CD14-positive monocyte (primary cell): ENCODE measurements at regions of chr12 and their contacts with region 1.

Region 1: DNA sequence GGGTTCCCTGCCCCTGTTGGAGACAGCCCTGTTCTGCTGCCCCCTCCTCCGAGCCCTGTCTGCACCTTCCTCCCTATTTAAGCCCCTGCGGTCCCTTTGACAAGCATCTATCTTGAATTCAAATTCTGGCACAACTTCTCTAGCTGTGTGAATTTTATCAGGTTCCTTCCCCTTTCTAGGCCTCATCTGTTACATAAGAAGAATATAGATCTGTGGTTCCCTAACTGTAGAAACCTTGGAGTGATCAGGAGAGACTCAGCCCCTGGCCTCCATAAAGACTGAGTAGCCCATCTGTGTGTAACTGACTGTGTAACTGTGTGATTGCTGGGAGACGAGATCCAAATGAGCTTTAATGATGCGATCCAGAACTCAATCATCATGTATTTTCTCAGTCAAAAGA is 13.0 kb upstream of the RACGAP1 start:
- DNase-seq: peak in 1 of 3 donors; percentile 23
- H3K4me3 ChIP-seq: no peak overlapping the region
- H3K4me3 Mint-ChIP-seq: no peak overlapping the region
- H3K27ac ChIP-seq: no peak overlapping the region
- H3K27ac Mint-ChIP-seq: peak overlapping the region in 2 of 7 donors; percentile 42 to 64
- H3K4me1 ChIP-seq: peaks cover 19 to 20% of the 10 kb centered on the region in 2 donors
- H3K4me1 Mint-ChIP-seq: peaks cover 30% of the 10 kb centered on the region
- H3K27me3 ChIP-seq: no peaks in the 10 kb centered on the region
- H3K27me3 Mint-ChIP-seq: peaks cover 5 to 20% (median 7%) of the 10 kb centered on the region in 3 donors
- CTCF ChIP-seq: no peak

Region 2: GRCh38 chr12:49049566-49050413 is 988.5 kb before region 1 on chr12:
- intact Hi-C with region 1: no loop called
- DNase-seq: no peak
- H3K4me3 ChIP-seq: no peak overlapping the region
- H3K4me3 Mint-ChIP-seq: no peak overlapping the region
- H3K27ac ChIP-seq: no peak overlapping the region
- H3K27ac Mint-ChIP-seq: peak overlapping the region in 4 of 7 donors; percentile 32 to 57 (median 41)
- H3K4me1 ChIP-seq: no peaks in the 10 kb centered on the region
- H3K4me1 Mint-ChIP-seq: peaks cover 2% of the 10 kb centered on the region
- H3K27me3 ChIP-seq: no peaks in the 10 kb centered on the region
- H3K27me3 Mint-ChIP-seq: peaks cover 0 to 3% (median 0%) of the 10 kb centered on the region in 3 donors
- CTCF ChIP-seq: no peak

Region 3: DNA sequence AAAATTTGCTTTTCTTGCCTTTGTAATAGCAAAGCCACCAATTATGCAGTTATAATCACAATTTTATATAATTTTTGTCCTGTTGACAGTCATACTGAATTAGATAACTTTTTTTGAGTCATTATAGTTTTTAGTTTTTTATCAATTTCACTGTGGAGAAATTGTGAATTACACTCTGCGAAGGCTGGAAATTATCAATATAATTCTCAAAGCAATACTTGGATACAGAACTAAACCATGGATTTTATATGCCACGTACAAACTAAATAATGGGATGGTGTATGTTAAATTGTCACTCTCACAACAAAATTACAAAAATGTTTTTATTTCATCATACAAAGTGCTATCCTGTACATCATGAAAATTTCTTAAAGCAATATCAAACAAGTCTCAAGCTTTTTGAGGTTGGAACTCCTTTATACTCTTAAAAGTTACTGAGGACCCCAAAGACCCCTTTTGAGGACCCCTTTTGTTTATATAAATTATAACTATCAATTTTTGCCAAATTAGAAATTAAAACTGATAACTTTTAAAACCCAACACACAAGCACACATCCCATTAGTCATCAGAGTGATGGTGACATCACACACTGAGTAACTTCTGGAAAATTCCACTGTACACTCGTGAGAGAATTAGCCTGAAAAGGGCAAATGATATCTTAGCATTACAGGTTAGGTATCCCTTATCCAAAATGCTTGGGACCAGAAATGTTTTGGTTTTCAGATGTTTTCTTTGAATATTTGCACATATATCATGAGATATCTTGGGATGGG is 107.6 kb before region 1 on chr12:
- intact Hi-C with region 1: no loop called
- DNase-seq: peak in 1 of 3 donors; percentile 76
- H3K4me3 ChIP-seq: no peak overlapping the region
- H3K4me3 Mint-ChIP-seq: no peak overlapping the region
- H3K27ac ChIP-seq: no peak overlapping the region
- H3K27ac Mint-ChIP-seq: no peak overlapping the region
- H3K4me1 ChIP-seq: no peaks in the 10 kb centered on the region
- H3K4me1 Mint-ChIP-seq: no peaks in the 10 kb centered on the region
- H3K27me3 ChIP-seq: peaks cover 0 to 8% of the 10 kb centered on the region in 2 donors
- H3K27me3 Mint-ChIP-seq: peaks cover 19 to 26% (median 22%) of the 10 kb centered on the region in 3 donors
- CTCF ChIP-seq: no peak

Region 4: GRCh38 chr12:49983892-49984291 is 54.4 kb before region 1 on chr12:
- intact Hi-C with region 1: loop called in 1 of 2 experiments (anchors 5 kb)
- DNase-seq: peak; percentile 30 to 73 (median 73)
- H3K4me3 ChIP-seq: peak overlapping the region in 1 of 3 experiments; percentile 65
- H3K4me3 Mint-ChIP-seq: peak overlapping the region; percentile 41 to 77
- H3K27ac ChIP-seq: peak overlapping the region; percentile 50 to 76
- H3K27ac Mint-ChIP-seq: peak overlapping the region; percentile 75 to 89 (median 86)
- H3K4me1 ChIP-seq: peaks cover 79 to 93% of the 10 kb centered on the region in 2 donors
- H3K4me1 Mint-ChIP-seq: peaks cover 92% of the 10 kb centered on the region
- H3K27me3 ChIP-seq: no peaks in the 10 kb centered on the region
- H3K27me3 Mint-ChIP-seq: peaks cover 0 to 3% (median 1%) of the 10 kb centered on the region in 3 donors
- CTCF ChIP-seq: no peak